Prostate gland (tissue), 2 donors: ENCODE measurements at regions of chr7 and their contacts with region 1.

Region 1: GRCh38 chr7:65307651-65308299 is 65.9 kb upstream of the ZNF92 start:
- DNase-seq: peak; percentile 25
- H3K4me3 ChIP-seq: no peak overlapping the region
- H3K27ac ChIP-seq: no peak overlapping the region
- H3K4me1 ChIP-seq: no peaks in the 10 kb centered on the region
- H3K27me3 ChIP-seq: no peaks in the 10 kb centered on the region
- CTCF ChIP-seq: peak; percentile 58 to 76 (median 65)
- POLR2A ChIP-seq: no peak

Region 2: GRCh38 chr7:64951250-64951848 is 356.4 kb before region 1 on chr7:
- intact Hi-C with region 1: loop called (anchors 2 kb)
- DNase-seq: no peak
- H3K4me3 ChIP-seq: no peak overlapping the region
- H3K27ac ChIP-seq: no peak overlapping the region
- H3K4me1 ChIP-seq: no peaks in the 10 kb centered on the region
- H3K27me3 ChIP-seq: no peaks in the 10 kb centered on the region
- CTCF ChIP-seq: peak in 3 of 4 experiments; percentile 67 to 85 (median 83)
- POLR2A ChIP-seq: no peak

Region 3: GRCh38 chr7:65254061-65254460 is 53.7 kb before region 1 on chr7:
- intact Hi-C with region 1: no loop called
- DNase-seq: no peak
- H3K4me3 ChIP-seq: no peak overlapping the region
- H3K27ac ChIP-seq: no peak overlapping the region
- H3K4me1 ChIP-seq: no peaks in the 10 kb centered on the region
- H3K27me3 ChIP-seq: no peaks in the 10 kb centered on the region
- CTCF ChIP-seq: no peak
- POLR2A ChIP-seq: no peak

Region 4: GRCh38 chr7:65927489-65928448 is 620.0 kb after region 1 on chr7:
- intact Hi-C with region 1: no loop called
- DNase-seq: no peak
- H3K4me3 ChIP-seq: no peak overlapping the region
- H3K27ac ChIP-seq: no peak overlapping the region
- H3K4me1 ChIP-seq: no peaks in the 10 kb centered on the region
- H3K27me3 ChIP-seq: no peaks in the 10 kb centered on the region
- CTCF ChIP-seq: no peak
- POLR2A ChIP-seq: no peak